Activated T-helper 1 cell treated with anti-CD3 and anti-CD28 coated beads, Interleukin-12 subunit alpha, Interleukin-12 subunit beta, Interleukin-2, Interleukin-4 antibody, amounts not matched to agents 30 ng/mL and 10 ng/mL and 1 ng/mL, durations not matched to agents 14 hours and 24 hours and 36 hours (primary cell): ENCODE measurements at regions of chr1 and their contacts with region 1.

Region 1: GRCh38 chr1:16366722-16367257 is at the start of gene SZRD1:
- DNase-seq: peak; percentile 94
- H3K4me3 Mint-ChIP-seq: peak within 1 kb of the TSS; percentile 96
- H3K27ac Mint-ChIP-seq: peak within 1 kb of the TSS; percentile 99
- H3K4me1 Mint-ChIP-seq: peaks cover 38% of the 10 kb centered on the region
- H3K27me3 Mint-ChIP-seq: peaks cover 3% of the 10 kb centered on the region
- total RNA-seq, gene SZRD1: 212 and 216 TPM in 2 replicates

Region 2: DNA sequence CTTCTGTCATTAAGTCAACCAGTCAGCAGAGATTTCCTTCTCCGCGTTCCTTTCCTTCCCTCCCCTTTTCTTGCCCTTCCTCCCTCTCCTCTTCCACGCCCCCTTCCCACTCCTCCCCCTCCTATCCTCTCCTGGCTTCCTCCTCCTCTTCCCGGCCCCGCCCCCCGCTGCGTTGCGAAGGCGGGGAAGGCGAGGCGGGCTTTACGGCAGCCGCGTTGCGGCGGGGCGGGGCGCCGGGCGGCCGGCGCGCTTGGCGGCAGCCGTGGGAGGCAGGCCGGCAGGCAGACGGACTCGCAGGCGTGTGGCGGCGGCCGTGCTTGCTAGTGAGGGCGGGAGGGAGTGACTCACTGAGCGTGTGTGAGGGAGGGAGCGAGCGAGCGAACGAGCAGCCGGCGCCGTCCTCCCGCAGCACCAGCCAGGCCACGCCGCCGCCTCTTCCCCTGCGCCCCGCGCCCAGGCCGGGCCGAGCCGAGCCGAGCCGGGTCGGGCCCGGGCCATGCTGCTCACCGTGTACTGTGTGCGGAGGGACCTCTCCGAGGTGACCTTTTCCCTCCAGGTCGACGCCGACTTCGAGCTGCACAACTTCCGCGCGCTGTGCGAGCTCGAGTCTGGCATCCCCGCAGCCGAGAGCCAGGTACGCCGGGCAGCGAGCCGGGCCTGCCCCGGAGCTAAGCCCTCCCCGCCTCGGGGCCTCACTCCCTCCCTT is 749.5 kb before region 1 on chr1 and contains the start of gene DDI2:
- intact Hi-C with region 1: loop called (anchors 2 kb)
- DNase-seq: peak; percentile 94
- H3K4me3 Mint-ChIP-seq: peak within 1 kb of the TSS; percentile 96
- H3K27ac Mint-ChIP-seq: peak within 1 kb of the TSS; percentile 93
- H3K4me1 Mint-ChIP-seq: peaks cover 43% of the 10 kb centered on the region
- H3K27me3 Mint-ChIP-seq: no peaks in the 10 kb centered on the region
- total RNA-seq, gene DDI2: 49.9 and 51.4 TPM in 2 replicates

Region 3: GRCh38 chr1:15966081-15966955 is 400.5 kb before region 1 on chr1:
- intact Hi-C with region 1: loop called (anchors 2 kb)
- DNase-seq: peak; percentile 72
- H3K4me3 Mint-ChIP-seq: peak overlapping the region; percentile 79
- H3K27ac Mint-ChIP-seq: peak overlapping the region; percentile 95
- H3K4me1 Mint-ChIP-seq: peaks cover 77% of the 10 kb centered on the region
- H3K27me3 Mint-ChIP-seq: no peaks in the 10 kb centered on the region

Region 4: DNA sequence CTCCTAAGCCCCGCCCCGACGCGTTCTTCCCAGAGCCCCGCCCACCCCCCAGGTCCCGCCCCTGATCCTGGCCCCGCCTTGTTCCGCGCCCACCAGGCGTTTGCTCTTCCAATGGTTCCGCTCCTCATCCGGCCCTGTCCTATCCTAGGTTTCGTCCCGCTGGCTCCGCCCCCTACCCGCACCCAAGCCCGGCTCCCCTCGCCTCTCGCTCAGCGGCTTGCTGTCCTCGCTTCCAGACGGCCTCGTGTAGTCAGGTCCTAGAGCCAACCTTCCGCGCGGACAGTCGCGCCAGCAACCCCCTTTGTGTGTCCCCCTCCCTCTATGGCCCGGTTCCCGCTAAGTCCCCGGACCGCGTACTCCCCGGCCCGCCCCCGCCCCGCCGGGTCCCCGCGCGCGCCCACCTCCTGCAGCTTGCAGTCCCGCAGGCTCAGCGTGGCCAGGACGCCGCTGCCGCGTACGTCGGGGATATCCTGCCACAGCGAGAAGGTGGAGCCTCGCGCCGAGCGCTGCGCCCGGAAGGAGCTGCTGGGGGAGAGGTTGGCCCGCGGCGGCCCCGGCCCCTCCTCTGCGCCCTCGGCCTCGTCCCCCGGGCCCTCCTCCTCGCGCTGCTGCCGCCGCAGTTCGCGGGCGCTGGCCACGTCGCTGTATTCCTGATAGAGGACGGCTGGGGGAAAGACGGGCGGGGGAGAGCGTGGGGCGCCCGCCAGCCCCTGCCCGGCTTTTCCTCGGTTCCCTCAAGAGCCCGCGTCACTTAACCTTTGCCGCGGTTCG is 160.1 kb before region 1 on chr1:
- intact Hi-C with region 1: loop called (anchors 1 kb)
- DNase-seq: peak; percentile 92
- H3K4me3 Mint-ChIP-seq: peak overlapping the region; percentile 83
- H3K27ac Mint-ChIP-seq: peak overlapping the region; percentile 97
- H3K4me1 Mint-ChIP-seq: no peaks in the 10 kb centered on the region
- H3K27me3 Mint-ChIP-seq: no peaks in the 10 kb centered on the region

Region 5: DNA sequence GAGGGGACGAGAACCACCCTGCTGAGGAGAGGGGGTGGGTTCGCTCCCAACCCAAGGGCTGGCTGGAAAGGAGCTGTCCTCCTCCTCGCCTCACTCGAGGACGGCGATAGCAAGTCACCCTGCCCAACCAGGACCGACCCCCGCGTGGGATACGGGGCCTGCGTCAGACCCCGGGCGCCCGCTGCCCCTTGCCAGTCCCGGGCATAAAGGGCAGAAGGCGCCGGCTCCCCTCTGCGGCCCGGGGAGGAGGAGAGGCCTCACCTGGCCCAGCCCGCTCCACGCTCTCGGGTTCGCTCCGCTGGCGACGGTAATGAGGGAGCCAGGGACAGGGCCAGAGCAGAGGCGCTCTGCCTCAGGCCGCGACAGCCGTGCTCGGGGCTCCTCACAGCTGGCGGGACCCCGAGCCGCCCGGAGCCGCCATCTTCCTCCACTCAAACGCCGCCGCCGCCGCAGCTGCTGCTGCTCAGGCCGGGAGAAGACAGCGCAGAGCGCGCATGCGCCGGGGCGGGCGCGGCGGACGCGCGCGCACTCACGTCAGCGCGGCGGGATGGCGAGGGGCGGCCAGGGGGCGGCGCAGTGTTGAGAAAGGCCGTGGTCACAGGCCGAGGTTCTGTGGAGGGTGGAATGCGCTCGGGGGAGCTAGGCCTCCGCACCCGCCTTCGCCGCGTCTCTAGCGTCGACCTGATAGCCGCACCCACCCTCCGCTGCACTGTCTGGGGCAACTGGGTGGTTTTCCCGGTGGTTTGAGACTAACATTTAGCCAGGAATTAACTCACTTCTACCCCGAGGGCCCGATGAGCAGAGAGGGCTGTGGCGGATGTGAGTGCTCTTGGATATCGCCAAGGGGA is 14.6 kb before region 1 on chr1 and contains the start of gene FBXO42:
- intact Hi-C with region 1: loop called (anchors 1 kb)
- DNase-seq: peak; percentile 94
- H3K4me3 Mint-ChIP-seq: peak within 1 kb of the TSS; percentile 97
- H3K27ac Mint-ChIP-seq: peak within 1 kb of the TSS; percentile 88
- H3K4me1 Mint-ChIP-seq: peaks cover 29% of the 10 kb centered on the region
- H3K27me3 Mint-ChIP-seq: no peaks in the 10 kb centered on the region
- total RNA-seq, gene FBXO42: 17.1 and 19.1 TPM in 2 replicates

Region 6: GRCh38 chr1:16440470-16441281 is 73.9 kb after region 1 on chr1 and contains the start of gene NECAP2:
- intact Hi-C with region 1: loop called (anchors 1 kb)
- DNase-seq: peak; percentile 89
- H3K4me3 Mint-ChIP-seq: peak within 1 kb of the TSS; percentile 95
- H3K27ac Mint-ChIP-seq: peak within 1 kb of the TSS; percentile 93
- H3K4me1 Mint-ChIP-seq: peaks cover 33% of the 10 kb centered on the region
- H3K27me3 Mint-ChIP-seq: no peaks in the 10 kb centered on the region
- total RNA-seq, gene NECAP2: 79.9 and 81.9 TPM in 2 replicates

Region 7: DNA sequence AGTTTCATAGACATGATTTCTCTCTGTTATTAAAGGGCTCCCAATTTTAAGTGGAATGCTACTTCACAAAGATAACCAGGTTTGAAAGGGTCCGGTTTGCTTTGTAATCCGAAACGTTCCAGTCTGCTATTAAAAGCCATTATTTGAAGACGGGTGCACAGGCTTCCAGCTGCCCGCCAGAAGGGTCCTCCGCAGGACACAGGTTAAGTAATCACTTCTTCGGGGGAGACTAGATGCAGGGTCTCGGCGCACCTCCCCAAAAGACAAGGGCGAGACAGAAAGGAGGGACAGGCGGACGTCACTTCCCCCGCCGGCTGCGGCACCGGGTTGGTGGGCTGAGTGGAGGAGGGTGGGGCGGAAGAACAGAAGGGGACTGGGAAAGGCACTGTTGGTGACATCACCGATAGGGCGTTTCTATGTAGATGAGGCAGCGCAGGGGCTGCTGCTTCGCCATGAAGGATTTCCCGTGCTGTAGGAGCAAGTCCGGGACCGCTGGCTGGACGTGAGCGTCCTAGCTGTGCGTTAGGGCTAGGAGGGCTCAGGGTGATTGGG is 537.8 kb after region 1 on chr1:
- intact Hi-C with region 1: loop called (anchors 2 kb)
- DNase-seq: peak; percentile 99
- H3K4me3 Mint-ChIP-seq: no peak overlapping the region
- H3K27ac Mint-ChIP-seq: no peak overlapping the region
- H3K4me1 Mint-ChIP-seq: peaks cover 19% of the 10 kb centered on the region
- H3K27me3 Mint-ChIP-seq: no peaks in the 10 kb centered on the region